ENCODE measurements at regions of chr5 and their contacts with region 1.

Region 1: DNA sequence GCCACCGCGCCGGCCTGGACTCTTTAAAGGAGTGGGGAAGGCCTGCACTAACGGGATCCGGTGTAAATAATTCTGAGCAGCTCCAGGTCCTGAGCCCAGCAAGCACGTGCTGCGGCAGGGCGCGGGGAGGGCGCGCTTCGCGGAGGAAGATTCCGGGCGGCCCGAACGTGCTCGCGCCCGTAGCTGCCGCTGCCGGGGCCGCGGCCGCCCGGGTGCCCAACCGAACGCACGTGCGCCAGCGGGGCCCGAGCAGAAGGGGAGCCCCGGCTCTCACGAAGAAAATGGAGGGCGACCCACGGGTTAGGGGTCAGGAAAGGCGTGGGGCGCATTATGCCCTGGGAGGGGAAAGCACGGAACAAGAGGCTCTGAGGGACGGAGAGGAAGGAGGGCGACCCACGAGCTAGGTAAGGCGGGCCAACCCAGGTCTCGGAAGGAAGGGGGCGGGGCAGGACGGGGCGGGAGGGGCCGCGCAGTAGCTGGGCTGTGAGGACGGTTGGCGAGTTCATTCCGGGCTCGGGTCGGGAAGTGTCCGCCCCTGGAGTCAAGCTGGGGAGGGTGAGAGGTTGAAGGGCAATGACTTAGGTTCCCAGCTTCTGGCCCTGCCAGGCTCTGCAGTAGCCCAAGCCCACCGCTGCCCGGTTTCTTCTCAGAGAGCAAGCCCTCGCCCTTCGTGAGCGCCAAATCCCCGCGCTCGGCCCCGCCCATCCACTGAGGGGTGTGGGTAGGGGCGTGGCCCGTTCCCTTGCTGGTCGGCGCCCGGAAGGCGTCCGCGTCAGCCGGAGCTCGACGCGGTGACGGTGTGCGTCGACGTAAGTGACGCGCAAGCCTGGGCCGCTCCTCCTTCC is at the start of gene ZNF131:
- DNase-seq: peak; percentile 98
- total RNA-seq, gene ZNF131: 16.3 TPM

Region 2: DNA sequence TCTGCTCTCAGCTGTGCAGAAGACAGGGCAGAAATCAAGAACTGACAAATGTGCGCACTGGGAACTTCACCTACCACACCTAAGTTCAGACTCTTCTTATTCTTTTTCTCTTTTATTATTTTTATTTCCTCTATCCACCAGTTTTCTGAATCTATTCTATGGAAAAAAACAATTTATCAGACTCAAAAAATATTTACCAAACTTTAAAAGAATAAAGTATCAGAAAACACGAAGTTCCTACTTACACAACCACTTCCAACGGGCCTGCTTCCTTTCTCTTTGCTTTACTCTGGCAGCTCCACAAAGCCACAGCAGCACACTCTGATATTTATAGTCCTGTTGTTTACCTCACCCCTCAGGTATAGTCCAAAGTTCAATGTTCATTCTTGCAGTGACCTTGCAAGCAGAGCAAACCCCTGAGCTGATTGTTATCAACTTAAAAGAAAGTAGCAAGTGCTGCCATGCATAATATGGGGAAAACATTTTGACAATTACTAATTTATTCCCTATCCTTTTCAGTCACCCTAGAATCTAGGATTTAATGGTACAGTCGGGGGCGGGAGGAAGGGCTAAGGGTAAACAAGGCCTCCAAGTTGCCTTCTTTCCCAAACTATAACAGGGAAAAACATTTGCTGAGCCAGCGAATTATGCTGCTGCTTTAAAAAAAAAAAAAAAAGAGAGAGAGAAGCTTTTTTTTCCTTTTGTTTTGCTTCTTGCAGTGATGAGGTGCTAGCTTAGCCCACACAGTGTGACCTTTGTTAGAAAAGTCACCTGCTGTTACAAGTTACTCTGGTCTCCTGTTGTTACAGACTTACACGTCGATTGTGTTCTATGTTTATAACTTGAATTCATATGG is 309.1 kb before region 1 on chr5 and contains the start of gene SELENOP:
- intact Hi-C with region 1: loop called (anchors 5 kb)
- DNase-seq: no peak
- total RNA-seq, gene SELENOP: 149 TPM

Region 3: DNA sequence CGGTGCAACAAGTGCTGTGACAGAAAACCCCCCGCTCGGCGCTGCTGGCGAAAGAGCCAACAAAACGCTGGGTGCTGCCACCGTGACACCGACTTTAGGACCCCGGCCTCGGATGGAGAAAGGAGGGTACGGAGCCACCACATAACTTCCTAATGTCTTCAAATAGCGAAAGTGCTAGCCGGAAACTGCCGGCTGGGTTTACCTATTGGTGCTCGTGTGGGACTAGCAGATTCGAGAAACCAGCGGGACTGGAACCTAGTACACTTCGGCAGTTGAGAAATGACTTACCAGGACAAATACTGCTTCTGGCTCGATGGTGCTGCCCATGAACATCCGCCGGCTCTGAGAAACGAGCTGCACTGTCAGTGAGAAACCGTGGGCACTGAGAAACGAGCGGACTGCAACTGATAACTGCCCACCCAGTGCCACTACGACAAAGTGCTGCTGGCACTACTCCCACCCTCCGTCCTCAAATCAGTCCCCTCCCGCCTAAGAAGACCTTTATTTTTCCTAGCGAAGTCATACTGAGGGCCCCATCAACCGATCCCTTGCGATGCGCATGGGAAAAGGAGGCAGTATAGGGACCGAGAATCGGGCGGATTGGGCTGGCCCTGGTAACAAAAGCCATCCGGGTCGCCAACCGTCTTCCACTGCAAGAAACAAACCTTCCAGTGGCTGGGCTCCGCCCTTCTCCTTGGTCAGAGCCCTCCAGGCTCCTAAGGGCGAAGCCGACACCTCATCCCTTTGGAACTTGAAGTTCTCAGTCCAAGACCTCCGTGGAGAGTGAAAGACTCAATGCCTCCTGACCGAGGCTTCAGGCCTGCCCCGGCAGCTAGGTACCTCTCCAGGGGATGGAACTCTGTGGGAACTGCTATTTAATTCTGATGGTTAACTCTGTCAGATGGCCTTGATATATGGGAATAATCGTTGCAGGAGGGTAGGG is 53.9 kb before region 1 on chr5:
- intact Hi-C with region 1: loop called (anchors 2 kb)
- DNase-seq: peak; percentile 95

Region 4: GRCh38 chr5:43313035-43313853 is 192.3 kb after region 1 on chr5 and contains the start of gene HMGCS1:
- intact Hi-C with region 1: loop called (anchors 1 kb)
- DNase-seq: peak; percentile 98
- total RNA-seq, gene HMGCS1: 34.4 TPM